GM18951 (cell line): ENCODE measurements at regions of chrX and their contacts with region 1.

Region 1: DNA sequence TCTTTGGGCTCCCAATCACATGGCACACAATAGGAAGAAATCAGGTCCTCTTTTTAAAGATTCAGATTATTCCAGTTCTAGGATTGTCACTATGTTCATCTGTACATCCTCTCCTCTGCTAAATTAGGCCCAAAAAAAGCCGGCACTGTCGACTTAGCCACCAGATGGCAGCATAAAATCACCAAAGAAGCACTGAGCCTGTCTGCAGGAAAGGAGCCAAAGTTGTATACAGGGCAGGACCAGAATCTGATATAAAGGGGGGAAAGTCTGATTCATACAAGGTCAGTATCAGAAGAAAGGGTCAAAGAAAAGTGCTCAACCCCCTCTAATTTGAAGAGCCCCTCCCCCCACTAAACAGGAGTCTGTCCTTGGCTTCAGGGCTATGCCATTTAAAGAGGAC is 292.5 kb downstream of the CHIC1 start:
- POLR2A ChIP-seq: no peak

Region 2: GRCh38 chrX:74015379-74016019 is 160.0 kb after region 1 on chrX:
- in situ Hi-C with region 1: loop called (anchors 10 kb)
- POLR2A ChIP-seq: no peak

Region 3: GRCh38 chrX:74133156-74133796 is 277.7 kb after region 1 on chrX:
- in situ Hi-C with region 1: loop called (anchors 10 kb)
- POLR2A ChIP-seq: no peak